Activated B cell treated with CpG ODN at 0.5 μM for 24 hours (primary cell): ENCODE measurements at regions of chr3 and their contacts with region 1.

Region 1: DNA sequence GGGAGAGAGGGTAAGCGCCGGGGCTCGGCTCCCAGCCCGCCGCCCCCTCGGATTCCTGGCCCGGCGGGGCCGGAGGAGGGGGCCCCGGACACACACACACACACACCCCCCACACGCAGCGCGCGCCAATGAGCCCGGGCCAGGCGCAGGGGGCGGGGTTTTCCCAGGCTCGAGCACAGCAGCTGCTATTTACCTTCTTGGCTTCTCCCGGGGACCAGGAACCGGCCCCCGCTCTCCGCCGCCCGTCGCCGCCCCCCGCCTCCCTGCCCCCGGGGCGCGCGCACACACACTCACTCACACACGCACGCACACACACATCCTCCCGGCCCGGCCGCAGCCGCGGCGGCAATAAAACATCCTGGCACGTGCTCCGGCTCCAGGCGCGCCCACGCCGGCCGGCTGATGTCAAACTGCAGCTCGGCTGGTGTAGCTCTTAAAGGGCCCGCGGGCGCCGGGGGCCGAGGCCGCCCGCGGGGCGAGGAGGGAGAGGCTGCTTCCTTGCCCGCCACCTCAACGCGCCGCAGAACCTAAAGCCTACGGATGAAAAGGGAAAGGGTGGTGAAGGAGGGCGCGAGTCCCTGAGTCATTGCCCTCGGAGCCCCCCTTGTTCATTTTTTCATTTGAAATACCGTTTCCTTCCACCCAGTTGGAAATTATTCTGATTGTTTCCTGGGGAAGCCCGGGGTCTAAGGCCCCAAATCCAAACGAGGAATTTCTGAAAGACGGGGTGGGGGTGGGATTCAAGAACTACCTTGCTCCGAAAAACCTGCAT is 1.0 kb upstream of the HES1 start:
- DNase-seq: peak; percentile 82
- ATAC-seq: peak; percentile 37
- H3K4me3 Mint-ChIP-seq: peak overlapping the region; percentile 92
- H3K27ac Mint-ChIP-seq: peak overlapping the region; percentile 96
- H3K4me1 Mint-ChIP-seq: peaks cover 78% of the 10 kb centered on the region
- H3K27me3 Mint-ChIP-seq: peaks cover 1% of the 10 kb centered on the region
- CTCF ChIP-seq: no peak

Region 2: DNA sequence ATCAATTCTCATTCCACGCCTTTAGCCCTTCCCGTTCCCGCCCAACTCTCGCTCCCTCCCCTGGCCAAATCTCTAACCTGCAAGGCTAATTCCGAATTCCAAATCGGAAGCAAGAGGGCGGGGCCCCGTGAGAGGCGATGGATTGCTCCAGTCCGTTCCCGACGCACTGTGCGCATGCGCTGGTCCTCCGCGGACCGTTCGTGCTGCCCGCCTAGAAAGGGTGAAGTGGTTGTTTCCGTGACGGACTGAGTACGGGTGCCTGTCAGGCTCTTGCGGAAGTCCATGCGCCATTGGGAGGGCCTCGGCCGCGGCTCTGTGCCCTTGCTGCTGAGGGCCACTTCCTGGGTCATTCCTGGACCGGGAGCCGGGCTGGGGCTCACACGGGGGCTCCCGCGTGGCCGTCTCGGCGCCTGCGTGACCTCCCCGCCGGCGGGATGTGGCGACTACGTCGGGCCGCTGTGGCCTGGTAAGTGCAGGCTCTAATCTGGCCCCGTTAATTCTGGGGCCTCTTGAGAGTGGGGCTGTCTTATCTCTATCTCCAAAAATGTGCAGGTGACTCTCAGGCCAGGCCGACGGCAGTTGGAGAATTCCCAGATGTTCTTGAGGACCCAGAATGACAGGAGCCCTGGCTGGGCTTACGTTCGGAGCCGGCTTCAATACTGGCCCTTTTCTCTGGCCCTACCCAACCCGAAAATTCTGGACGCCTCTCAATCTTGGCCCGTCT is 541.8 kb before region 1 on chr3 and contains the start of gene OPA1:
- CTCF ChIA-PET with region 1: no interaction called
- POLR2A ChIA-PET with region 1: no interaction called
- intact Hi-C with region 1: loop called (anchors 1 kb)
- DNase-seq: peak; percentile 82
- ATAC-seq: peak; percentile 96
- H3K4me3 Mint-ChIP-seq: peak within 1 kb of the TSS; percentile 94
- H3K27ac Mint-ChIP-seq: peak within 1 kb of the TSS; percentile 89
- H3K4me1 Mint-ChIP-seq: peaks cover 52% of the 10 kb centered on the region
- H3K27me3 Mint-ChIP-seq: no peaks in the 10 kb centered on the region
- CTCF ChIP-seq: no peak
- total RNA-seq, gene OPA1: 76.1 and 80.6 TPM in 2 replicates

Region 3: DNA sequence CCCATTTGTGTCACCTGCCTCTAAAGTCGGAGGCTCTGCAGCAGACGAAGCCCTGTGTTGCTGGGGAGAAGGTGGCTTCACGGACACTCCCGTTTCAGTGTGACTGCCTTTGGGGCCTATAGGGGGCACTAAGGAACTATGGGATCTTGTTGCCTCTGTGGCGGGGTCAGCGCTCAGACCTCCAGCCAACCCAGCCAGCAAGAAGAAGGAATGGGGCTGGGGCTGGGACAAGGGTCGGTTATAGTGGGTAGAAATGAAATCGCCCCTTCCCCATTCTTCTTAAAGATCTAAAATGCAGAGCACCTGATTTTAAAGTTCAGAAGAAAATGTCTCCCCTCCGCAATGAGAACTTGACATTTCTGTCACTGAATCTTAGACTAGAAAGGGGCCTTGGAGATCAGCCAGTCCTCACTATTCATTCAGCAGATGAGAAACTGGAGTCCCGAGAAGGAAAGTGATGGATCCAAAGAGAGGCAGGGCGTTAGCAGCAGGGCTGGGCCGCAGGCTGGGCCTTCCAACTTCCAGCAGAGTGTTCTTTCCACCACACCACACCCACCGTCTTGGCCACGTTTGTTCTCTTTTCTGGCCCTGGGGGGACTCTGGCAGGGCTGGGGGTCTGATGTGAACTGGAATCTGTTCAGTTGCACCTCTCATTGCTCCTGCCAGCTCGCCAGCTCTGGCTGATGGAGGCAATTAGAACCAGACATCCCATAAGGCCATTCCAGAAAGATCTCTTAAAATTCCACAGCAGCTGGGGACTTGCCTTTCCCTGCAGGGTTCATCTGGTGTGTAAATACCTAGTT is 346.6 kb before region 1 on chr3:
- CTCF ChIA-PET with region 1: interaction called, 62 read pairs
- POLR2A ChIA-PET with region 1: interaction called, 4 read pairs
- intact Hi-C with region 1: loop called (anchors 1 kb)
- DNase-seq: peak; percentile 36
- ATAC-seq: peak; percentile 98
- H3K4me3 Mint-ChIP-seq: no peak overlapping the region
- H3K27ac Mint-ChIP-seq: peak overlapping the region; percentile 15
- H3K4me1 Mint-ChIP-seq: peaks cover 16% of the 10 kb centered on the region
- H3K27me3 Mint-ChIP-seq: peaks cover 25% of the 10 kb centered on the region
- CTCF ChIP-seq: peak; percentile 34

Region 4: DNA sequence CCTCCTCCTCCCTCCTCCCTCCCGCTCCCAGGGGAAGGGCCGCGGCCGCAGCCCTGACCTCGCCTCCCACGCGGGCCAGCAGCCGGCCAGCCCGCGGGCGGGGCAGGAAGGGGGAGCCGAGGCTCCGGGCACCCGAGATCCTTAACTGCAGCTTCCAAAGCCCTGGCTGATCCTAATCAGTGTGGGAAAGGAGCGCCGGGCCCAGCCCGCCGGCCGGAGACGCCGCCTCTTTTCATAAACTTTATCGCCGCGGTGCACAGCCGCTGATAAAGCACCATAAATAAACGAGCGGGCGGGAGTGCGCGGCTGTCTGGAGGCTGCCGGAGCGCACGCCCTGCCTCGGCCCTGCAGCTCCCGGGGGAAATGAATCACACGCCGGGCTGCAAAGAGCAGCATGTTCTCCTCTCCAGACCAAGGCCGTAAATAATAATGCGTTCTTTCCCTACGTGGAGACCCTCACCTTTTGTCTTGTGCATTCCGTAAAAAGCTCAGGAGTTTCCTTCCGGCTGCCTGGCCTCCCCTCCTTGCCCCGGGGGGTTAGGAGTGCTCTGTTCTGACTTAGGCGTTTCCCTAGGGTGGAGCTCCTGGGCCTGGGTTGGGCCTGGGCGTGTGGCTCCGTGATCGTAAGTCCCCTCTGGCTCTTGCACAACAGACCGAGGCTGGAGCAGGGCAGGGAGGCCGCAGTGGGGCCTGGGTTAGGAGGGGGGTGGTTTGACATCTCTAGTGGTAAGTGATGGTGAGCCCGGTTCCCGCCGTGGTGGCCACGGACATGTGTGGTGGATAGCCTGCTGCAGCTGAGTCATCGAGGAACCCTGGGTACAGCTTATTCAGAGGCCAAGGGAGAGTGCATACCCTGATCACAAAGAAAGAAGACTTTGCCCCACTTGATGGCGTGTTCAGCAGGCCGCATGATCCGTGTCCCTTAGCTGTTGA is 131.6 kb before region 1 on chr3:
- CTCF ChIA-PET with region 1: interaction called, 9 read pairs
- POLR2A ChIA-PET with region 1: interaction called, 11 read pairs
- intact Hi-C with region 1: loop called (anchors 1 kb)
- DNase-seq: peak; percentile 70
- ATAC-seq: peak; percentile 94
- H3K4me3 Mint-ChIP-seq: peak overlapping the region; percentile 76
- H3K27ac Mint-ChIP-seq: peak overlapping the region; percentile 65
- H3K4me1 Mint-ChIP-seq: peaks cover 40% of the 10 kb centered on the region
- H3K27me3 Mint-ChIP-seq: peaks cover 6% of the 10 kb centered on the region
- CTCF ChIP-seq: no peak

Region 5: DNA sequence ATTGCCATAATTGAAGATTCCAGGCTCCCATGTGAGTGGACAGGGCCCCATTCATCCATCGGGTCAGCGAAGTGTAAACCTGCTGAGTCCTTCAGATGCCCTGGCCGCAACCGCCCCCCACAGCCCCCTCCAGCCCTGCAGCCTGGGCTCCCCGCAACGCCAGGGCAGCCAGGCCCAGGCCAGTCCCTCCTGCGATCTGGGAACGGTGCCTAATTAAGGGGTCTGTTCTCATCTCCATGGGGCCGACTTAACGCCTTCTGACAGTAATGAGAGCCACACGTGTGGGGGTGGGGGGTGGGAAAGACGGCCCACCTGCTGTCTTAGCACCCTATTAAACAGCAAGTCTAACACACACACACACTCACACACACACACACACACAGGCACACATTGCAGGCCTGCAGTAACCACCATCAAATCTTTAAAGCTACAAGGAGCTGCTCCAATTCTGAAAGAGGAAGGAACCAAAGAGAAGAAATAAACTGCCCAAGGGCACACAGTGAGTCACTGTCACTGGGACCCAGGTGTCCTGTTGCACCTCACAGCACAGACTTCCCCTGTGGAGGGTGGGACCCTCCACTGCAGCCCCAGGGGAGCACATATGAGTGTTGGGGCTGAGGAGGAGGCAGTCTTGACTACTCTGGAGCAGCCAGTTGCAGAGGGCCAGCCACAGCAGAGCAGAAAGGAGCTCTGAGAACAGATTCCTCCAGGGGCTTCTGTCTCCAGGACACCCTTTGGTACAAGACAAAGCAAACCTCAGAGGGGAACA is 30.8 kb before region 1 on chr3:
- CTCF ChIA-PET with region 1: interaction called, 43 read pairs
- POLR2A ChIA-PET with region 1: interaction called, 465 read pairs
- intact Hi-C with region 1: loop called (anchors 1 kb)
- DNase-seq: peak; percentile 75
- ATAC-seq: peak; percentile 87
- H3K4me3 Mint-ChIP-seq: peak overlapping the region; percentile 75
- H3K27ac Mint-ChIP-seq: peak overlapping the region; percentile 87
- H3K4me1 Mint-ChIP-seq: peaks cover 95% of the 10 kb centered on the region
- H3K27me3 Mint-ChIP-seq: no peaks in the 10 kb centered on the region
- CTCF ChIP-seq: no peak

Region 6: GRCh38 chr3:194315088-194315964 is 180.4 kb after region 1 on chr3:
- CTCF ChIA-PET with region 1: interaction called, 77 read pairs
- POLR2A ChIA-PET with region 1: interaction called, 4 read pairs
- intact Hi-C with region 1: loop called (anchors 1 kb)
- DNase-seq: peak; percentile 86
- ATAC-seq: peak; percentile 88
- H3K4me3 Mint-ChIP-seq: peak overlapping the region; percentile 77
- H3K27ac Mint-ChIP-seq: no peak overlapping the region
- H3K4me1 Mint-ChIP-seq: peaks cover 28% of the 10 kb centered on the region
- H3K27me3 Mint-ChIP-seq: peaks cover 25% of the 10 kb centered on the region
- CTCF ChIP-seq: peak; percentile 96